Activated CD4-positive, alpha-beta T cell treated with anti-CD3 and anti-CD28 coated beads for 36 hours (primary cell): ENCODE measurements at regions of chr2 and their contacts with region 1.

Region 1: DNA sequence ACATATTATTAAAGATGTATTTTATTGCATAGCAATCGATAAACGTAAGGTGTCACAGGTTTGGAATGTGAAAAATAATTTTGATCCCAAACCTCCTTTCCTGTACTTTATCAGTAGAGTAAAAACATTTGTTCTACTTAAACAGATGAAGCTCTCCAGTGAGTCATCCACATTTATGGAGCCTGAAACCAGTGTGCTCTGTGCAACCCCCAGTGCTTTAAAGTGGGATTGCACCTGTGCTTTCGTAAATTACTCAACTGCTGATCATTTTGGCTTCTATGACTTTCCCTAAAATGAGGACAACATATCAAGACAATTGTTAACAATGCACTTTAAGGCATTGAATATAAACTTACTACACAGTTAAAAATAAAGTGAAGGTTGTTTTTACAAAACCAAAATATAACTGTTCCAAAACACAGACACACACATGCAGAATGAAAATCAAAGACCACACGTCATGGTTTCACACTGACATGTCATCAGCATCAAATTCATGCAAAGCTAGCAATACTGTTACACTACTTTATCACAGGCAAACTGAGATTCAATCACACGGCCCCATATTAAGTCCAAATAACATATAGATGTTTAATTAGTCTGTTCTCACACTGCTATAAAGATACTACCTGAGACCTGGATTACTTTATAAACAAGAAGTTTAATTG is 9.7 kb downstream of the TMEM18 start:
- DNase-seq: peak; percentile 65
- ATAC-seq: peak; percentile 96
- H3K4me3 Mint-ChIP-seq: no peak overlapping the region
- H3K27ac Mint-ChIP-seq: peak overlapping the region; percentile 61
- H3K4me1 Mint-ChIP-seq: peaks cover 26% of the 10 kb centered on the region
- H3K27me3 Mint-ChIP-seq: no peaks in the 10 kb centered on the region

Region 2: DNA sequence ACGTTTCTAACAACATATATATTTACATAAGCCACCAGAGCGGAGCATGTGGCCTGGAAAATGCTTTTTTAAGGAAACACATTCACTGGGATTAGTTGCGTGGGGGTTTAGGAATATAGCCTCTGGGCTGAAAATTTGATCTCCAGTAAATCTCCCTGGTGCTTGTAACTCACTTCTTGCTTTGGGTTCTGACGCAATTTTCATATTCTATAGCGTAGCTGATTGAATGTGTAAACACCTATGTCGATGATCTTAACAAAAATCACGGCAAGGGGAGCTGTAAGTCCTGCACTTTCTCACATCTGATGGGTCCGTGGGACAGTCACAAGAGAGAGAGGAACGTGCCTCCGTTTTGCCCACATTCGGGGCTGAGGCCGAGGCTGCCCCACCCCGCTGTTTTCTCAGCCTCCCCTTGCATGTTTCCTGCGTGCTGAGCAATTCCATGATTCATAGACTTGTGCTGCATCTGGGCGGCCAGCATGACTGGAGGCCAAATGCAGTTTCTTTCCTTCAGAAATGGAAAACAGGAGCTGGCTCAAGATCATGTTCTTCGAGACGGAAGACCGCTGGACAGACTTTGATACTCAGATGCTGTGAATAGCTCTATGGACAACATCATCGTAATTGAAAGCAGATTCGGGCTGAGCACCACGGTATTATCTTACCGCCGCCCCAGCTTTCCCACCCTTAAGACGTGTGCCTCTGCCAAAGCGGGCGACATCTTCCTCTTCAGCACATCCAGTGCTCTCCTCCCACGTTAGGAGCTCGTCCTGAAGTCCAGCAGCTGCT is 99.4 kb before region 1 on chr2:
- CTCF ChIA-PET with region 1: no interaction called
- POLR2A ChIA-PET with region 1: no interaction called
- intact Hi-C with region 1: no loop called
- DNase-seq: no peak
- ATAC-seq: no peak
- H3K4me3 Mint-ChIP-seq: no peak overlapping the region
- H3K27ac Mint-ChIP-seq: no peak overlapping the region
- H3K4me1 Mint-ChIP-seq: no peaks in the 10 kb centered on the region
- H3K27me3 Mint-ChIP-seq: peaks cover 32% of the 10 kb centered on the region

Region 3: GRCh38 chr2:655626-656025 is 11.8 kb before region 1 on chr2:
- CTCF ChIA-PET with region 1: interaction called, 11 read pairs
- POLR2A ChIA-PET with region 1: no interaction called
- intact Hi-C with region 1: no loop called
- DNase-seq: no peak
- ATAC-seq: peak; percentile 36
- H3K4me3 Mint-ChIP-seq: no peak overlapping the region
- H3K27ac Mint-ChIP-seq: no peak overlapping the region
- H3K4me1 Mint-ChIP-seq: peaks cover 37% of the 10 kb centered on the region
- H3K27me3 Mint-ChIP-seq: no peaks in the 10 kb centered on the region